ENCODE measurements at regions of chr7 and their contacts with region 1.

Region 1: GRCh38 chr7:55255496-55256435 is 109.4 kb upstream of the LANCL2 start:
- DNase-seq: peak; percentile 71 to 85
- ATAC-seq: peak; percentile 89 to 91
- H3K4me3 ChIP-seq: peak overlapping the region; percentile 69
- H3K27ac ChIP-seq: peak overlapping the region; percentile 91 to 95
- H3K4me1 ChIP-seq: peaks cover 4% of the 10 kb centered on the region; the same call in 1 of the 3 replicates
- CTCF ChIP-seq: peak; percentile 82
- EP300 ChIP-seq: no peak
- POLR2A ChIP-seq: no peak
- RAD21 ChIP-seq: peak; percentile 91 to 94

Region 2: DNA sequence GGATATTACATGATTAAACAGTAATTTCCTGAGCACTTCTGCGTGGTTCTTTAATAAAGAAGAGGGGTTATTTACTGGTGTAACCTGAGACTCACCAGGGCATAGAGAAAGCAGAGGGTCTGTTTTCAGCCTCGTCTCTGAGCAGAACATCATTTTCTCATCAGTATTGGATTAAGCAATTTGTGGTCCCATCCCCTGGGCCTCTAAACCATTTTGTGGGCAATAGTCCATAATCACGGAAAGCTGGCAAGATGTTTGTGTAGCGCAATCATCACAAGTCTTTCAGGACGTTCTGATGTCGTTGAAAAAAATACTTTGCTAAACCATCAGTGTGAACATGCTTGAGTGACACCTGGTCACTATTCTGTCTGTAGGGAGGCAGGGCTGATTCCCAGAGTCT is 459.6 kb before region 1 on chr7:
- CTCF ChIA-PET with region 1: interaction called, 742 read pairs
- POLR2A ChIA-PET with region 1: no interaction called
- DNase-seq: no peak
- ATAC-seq: no peak
- H3K4me3 ChIP-seq: no peak overlapping the region
- H3K27ac ChIP-seq: no peak overlapping the region
- H3K4me1 ChIP-seq: peaks cover 7% of the 10 kb centered on the region
- CTCF ChIP-seq: no peak
- EP300 ChIP-seq: no peak
- POLR2A ChIP-seq: no peak
- RAD21 ChIP-seq: no peak

Region 3: GRCh38 chr7:55018361-55019190 is 237.2 kb before region 1 on chr7 and contains the start of gene EGFR:
- CTCF ChIA-PET with region 1: interaction called, 20 read pairs
- POLR2A ChIA-PET with region 1: no interaction called
- DNase-seq: peak; percentile 75 to 78
- ATAC-seq: peak; percentile 86
- H3K4me3 ChIP-seq: peak within 1 kb of the TSS; percentile 95
- H3K27ac ChIP-seq: peak within 1 kb of the TSS; percentile 97 to 98
- H3K4me1 ChIP-seq: peaks cover 32% of the 10 kb centered on the region
- CTCF ChIP-seq: no peak
- EP300 ChIP-seq: no peak
- POLR2A ChIP-seq: peak; percentile 72
- RAD21 ChIP-seq: peak; percentile 9 to 38; a peak in 3 of 5 replicates
- polyA plus RNA-seq, gene EGFR: 59.5 and 61.4 TPM in 2 replicates

Region 4: GRCh38 chr7:55073945-55074499 is 181.7 kb before region 1 on chr7:
- CTCF ChIA-PET with region 1: interaction called, 21 read pairs
- POLR2A ChIA-PET with region 1: no interaction called
- DNase-seq: peak; percentile 93 to 98
- ATAC-seq: peak; percentile 96 to 97
- H3K4me3 ChIP-seq: peak overlapping the region; percentile 14; the same call in 2 of the 3 replicates
- H3K27ac ChIP-seq: peak overlapping the region; percentile 75 to 92
- H3K4me1 ChIP-seq: peaks cover 95% of the 10 kb centered on the region
- CTCF ChIP-seq: no peak
- EP300 ChIP-seq: peak; percentile 39 to 67; a peak in 2 of 5 replicates
- POLR2A ChIP-seq: no peak
- RAD21 ChIP-seq: peak; percentile 17 to 34; a peak in 1 of 5 replicates

Region 5: DNA sequence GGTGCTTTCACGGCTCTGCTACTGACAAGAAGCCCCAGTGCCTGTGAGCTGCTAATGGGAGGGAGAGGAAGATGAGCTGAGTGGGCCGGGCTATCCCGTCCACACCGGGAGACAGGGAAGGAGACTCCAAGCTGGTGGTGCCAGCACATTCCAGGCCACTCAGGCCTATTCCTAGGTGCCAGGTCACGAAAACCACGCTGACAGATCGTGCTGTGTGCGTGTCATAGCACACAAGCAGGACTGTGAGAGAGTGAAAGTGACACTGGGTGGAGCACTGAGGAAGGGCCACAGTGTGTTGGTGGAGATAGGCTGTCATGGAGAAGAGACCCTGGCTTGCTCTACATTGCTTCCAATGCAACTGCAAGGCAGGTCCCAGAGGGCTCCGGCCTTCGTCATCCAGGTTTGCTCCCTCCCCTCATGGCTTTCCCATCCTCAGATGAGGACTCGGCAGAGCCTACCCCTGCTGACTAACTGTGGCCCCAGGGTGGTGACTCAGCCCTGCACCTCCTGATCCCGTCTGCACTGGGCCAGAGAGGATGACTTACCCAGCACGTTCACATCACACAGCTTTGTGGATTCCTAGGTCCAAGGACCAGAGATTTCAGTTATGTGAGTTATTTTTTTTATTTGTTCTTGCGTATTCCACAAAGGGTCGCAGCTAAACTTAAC is 69.7 kb before region 1 on chr7:
- CTCF ChIA-PET with region 1: interaction called, 44 read pairs
- POLR2A ChIA-PET with region 1: no interaction called
- DNase-seq: peak; percentile 85 to 92
- ATAC-seq: peak; percentile 97
- H3K4me3 ChIP-seq: no peak overlapping the region; the same call in 2 of the 3 replicates
- H3K27ac ChIP-seq: peak overlapping the region; percentile 78 to 92
- H3K4me1 ChIP-seq: peaks cover 53% of the 10 kb centered on the region
- CTCF ChIP-seq: no peak
- EP300 ChIP-seq: no peak; a peak in 1 of 5 replicates
- POLR2A ChIP-seq: no peak
- RAD21 ChIP-seq: peak in 1 of 2 experiments; percentile 9; a peak in 1 of 5 replicates

Region 6: DNA sequence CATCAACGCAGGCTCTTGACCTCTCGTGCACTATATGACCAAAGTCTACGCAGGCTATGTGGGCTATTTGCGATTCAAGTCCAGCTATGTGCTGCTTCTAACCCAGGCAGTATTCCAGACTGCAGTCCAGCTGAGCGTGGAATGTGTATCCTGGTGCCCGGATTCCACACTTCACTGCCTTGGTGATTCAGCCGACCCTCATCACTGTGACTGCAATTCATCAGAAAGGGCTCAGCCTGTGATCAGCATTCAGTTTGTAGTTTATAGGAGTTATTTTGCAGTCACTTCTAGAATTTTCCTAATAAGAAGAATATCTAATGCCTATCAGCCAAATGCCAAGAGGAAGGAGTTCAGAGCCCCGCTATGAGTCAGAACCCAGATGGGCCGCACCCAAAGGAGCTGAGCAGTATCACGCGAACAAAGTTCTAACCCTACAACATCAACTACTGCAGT is 10.5 kb before region 1 on chr7:
- CTCF ChIA-PET with region 1: interaction called, 56 read pairs
- POLR2A ChIA-PET with region 1: no interaction called
- DNase-seq: no peak
- ATAC-seq: peak in 1 of 2 experiments; percentile 70; a peak in 3 of 6 replicates
- H3K4me3 ChIP-seq: no peak overlapping the region
- H3K27ac ChIP-seq: no peak overlapping the region
- H3K4me1 ChIP-seq: peaks cover 18% of the 10 kb centered on the region; the same call in 2 of the 3 replicates
- CTCF ChIP-seq: no peak
- EP300 ChIP-seq: no peak
- POLR2A ChIP-seq: no peak
- RAD21 ChIP-seq: no peak

Region 7: GRCh38 chr7:55515569-55516279 is 260.0 kb after region 1 on chr7:
- CTCF ChIA-PET with region 1: no interaction called
- POLR2A ChIA-PET with region 1: no interaction called
- DNase-seq: no peak
- ATAC-seq: no peak
- H3K4me3 ChIP-seq: no peak overlapping the region
- H3K27ac ChIP-seq: no peak overlapping the region
- H3K4me1 ChIP-seq: no peaks in the 10 kb centered on the region
- CTCF ChIP-seq: no peak
- EP300 ChIP-seq: no peak
- POLR2A ChIP-seq: no peak
- RAD21 ChIP-seq: no peak

Region 8: GRCh38 chr7:55557666-55558188 is 302.0 kb after region 1 on chr7:
- CTCF ChIA-PET with region 1: no interaction called
- POLR2A ChIA-PET with region 1: no interaction called
- DNase-seq: no peak
- ATAC-seq: peak; percentile 52 to 56; a peak in 1 of 6 replicates
- H3K4me3 ChIP-seq: no peak overlapping the region
- H3K27ac ChIP-seq: no peak overlapping the region
- H3K4me1 ChIP-seq: peaks cover 14% of the 10 kb centered on the region
- CTCF ChIP-seq: no peak
- EP300 ChIP-seq: no peak
- POLR2A ChIP-seq: no peak
- RAD21 ChIP-seq: no peak